Aorta (tissue), 5 donors: ENCODE measurements at regions of chr22 and their contacts with region 1.

Region 1: GRCh38 chr22:23178512-23179254 is 1.6 kb upstream of the BCR start:
- DNase-seq: peak; percentile 75 to 91
- ATAC-seq: peak; percentile 82
- H3K4me3 ChIP-seq: no peak overlapping the region
- H3K27ac ChIP-seq: peak overlapping the region in 1 of 2 donors; percentile 42
- H3K4me1 ChIP-seq: no peaks in the 10 kb centered on the region
- H3K27me3 ChIP-seq: no peaks in the 10 kb centered on the region

Region 2: DNA sequence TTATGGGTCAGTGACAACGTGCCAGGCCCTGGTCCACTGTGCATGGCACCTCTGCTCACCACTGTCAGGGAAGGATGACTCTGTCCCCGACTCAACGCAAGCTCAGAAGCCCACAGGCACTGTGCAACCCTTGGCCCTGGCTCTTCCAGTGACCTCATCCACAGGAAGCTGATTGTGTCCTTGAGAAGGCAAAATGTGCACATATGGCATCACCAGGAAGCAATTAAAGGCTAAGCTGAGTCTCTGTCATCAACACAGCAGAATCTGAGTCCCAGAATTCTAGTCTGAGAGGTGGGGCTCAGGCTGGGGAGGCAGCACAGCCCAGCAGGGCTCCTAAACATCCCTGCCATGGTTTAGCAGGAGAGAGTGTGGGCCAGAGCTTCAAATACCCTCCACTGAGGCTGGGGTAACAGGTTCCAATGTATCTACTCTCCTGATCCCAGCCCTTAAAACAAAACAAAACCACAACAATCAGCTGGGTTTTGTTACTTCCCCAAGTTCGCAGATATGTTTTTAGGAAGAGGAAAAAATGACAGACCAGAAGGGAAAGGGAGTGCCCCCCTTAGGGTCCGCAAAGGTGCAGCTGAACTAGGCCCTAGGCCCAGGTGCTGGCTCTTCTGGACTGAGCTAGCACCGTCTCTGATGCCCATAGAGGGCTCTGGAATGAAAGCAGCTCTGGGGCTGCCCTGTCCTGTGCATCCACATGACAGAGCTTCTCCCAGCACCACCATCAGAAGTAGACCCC is 141.8 kb before region 1 on chr22:
- intact Hi-C with region 1: no loop called
- DNase-seq: no peak
- ATAC-seq: no peak
- H3K4me3 ChIP-seq: no peak overlapping the region
- H3K27ac ChIP-seq: no peak overlapping the region
- H3K4me1 ChIP-seq: no peaks in the 10 kb centered on the region
- H3K27me3 ChIP-seq: no peaks in the 10 kb centered on the region

Region 3: DNA sequence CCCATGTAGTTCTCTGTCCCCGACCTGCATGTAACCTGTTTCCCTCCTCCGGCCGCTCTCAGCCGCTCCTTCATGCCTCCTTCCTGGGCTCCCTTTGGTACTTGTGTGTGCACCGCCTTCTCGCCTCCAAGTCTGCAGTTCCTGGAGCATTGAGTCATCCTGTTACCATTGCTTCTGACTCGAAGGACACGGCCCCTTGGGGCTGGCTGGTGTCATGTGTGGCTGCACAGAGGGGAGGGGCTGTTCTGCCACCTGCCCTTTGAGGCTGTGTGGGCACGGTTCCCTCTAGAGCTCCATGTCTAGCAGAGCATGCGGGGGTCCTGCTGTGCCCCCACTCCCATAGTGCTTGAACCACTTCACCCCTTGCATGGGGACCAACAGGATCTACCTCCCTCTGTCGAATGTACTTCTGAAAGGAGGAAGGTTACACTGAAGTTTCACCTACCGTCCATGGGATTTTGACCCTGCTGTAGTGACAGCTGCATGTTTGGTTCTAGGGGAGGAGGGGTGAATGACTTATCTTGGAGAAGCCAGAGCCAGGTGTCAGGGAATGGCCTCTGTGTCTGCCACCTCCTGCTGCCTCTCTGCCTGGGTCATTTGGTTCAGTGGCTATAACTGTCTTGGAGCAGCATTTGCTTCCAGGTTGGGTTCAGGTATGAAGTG is 41.3 kb after region 1 on chr22:
- intact Hi-C with region 1: loop called in 1 of 2 experiments (anchors 5 kb)
- DNase-seq: peak; percentile 75 to 83
- ATAC-seq: peak; percentile 23
- H3K4me3 ChIP-seq: no peak overlapping the region
- H3K27ac ChIP-seq: no peak overlapping the region
- H3K4me1 ChIP-seq: peaks cover 4 to 8% of the 10 kb centered on the region in 2 donors
- H3K27me3 ChIP-seq: no peaks in the 10 kb centered on the region

Region 4: DNA sequence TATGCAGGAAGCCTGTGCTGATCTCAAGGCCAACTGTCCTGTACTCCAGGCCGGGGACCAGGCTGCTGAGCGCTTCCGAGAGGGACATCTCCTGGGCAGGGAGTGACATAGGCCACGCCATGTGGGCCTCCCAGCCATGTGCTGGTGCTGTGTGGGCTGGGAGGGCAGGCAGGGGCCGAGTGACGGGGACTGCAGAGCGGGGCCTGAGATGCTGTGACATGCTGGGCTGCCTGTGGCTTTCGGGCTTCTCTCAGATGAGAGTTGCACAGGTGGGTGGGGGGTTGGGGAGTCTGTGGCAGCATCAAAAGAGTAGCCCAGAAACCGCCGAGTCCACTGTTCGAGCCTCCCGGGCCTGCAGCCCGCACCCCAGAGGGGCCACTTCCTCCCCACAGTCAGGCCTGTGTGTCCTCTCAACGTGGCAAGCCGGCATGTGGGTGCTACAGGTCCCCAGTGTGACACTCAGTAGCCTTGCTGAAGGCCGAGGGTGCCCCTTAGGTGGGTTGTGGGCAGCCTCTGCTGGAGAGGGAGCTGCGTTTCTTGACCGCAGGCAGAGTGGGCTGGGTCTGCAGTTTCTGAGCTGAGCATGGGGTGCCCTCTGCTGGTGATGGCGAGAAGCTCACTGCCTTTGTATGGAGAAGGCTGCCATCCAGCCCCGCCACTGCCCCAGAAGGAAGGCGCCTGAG is 102.9 kb after region 1 on chr22:
- intact Hi-C with region 1: loop called (anchors 1 kb)
- DNase-seq: peak; percentile 91 to 97
- ATAC-seq: peak; percentile 90
- H3K4me3 ChIP-seq: no peak overlapping the region
- H3K27ac ChIP-seq: peak overlapping the region in 1 of 2 donors; percentile 85
- H3K4me1 ChIP-seq: no peaks in the 10 kb centered on the region
- H3K27me3 ChIP-seq: no peaks in the 10 kb centered on the region

Region 5: DNA sequence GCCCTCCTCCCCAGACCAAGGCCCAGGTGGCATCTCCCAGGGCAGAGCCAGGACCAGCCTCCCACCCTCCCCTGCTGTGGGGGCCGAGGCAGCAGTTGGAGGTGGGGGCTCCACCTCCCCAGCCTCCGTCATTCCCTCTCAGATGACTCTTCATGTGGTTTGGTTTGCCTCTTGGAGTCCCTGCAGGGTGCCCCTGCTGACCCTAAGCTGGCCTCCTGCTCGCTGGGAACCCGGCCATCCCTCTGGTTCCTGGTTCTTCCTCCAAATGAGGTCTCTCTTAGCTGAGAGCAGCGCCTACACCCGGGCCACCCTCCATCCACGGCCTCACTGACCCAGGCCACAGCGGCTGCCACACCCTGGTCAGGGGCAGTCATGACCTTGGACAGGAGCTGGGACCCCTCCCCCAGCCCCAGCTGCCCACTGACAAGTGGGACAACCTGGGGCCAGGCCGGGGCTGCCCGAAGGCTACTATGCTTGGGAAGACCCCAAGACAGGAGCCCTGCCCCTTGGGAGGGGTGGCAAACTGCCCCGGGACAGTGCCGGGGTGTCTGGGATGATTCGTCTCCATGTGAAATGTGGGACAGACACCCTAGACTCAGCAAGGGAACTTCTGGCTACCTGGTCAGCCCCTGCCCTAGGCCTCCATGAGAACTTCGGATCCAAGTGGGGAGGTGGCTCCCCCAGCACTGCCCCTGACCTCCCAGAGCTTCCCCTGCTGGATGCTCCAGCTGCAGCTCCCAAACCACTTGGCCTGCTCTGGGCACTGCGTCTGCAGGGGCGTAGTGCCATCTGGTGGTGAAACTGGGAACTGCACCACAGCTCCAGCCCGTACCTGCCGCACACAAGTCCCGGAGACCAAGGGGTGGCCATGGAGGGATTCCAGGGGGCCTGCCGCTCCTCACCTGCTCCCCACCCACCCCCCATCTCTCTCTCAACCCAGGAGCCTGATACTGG is 206.9 kb after region 1 on chr22:
- intact Hi-C with region 1: loop called (anchors 2 to 5 kb)
- DNase-seq: peak; percentile 86 to 94
- ATAC-seq: peak; percentile 88
- H3K4me3 ChIP-seq: no peak overlapping the region
- H3K27ac ChIP-seq: no peak overlapping the region
- H3K4me1 ChIP-seq: no peaks in the 10 kb centered on the region
- H3K27me3 ChIP-seq: no peaks in the 10 kb centered on the region

Region 6: GRCh38 chr22:23539135-23539838 is 360.6 kb after region 1 on chr22:
- intact Hi-C with region 1: loop called in 1 of 2 experiments (anchors 10 kb)
- DNase-seq: peak; percentile 82 to 88
- ATAC-seq: peak; percentile 97
- H3K4me3 ChIP-seq: no peak overlapping the region
- H3K27ac ChIP-seq: no peak overlapping the region
- H3K4me1 ChIP-seq: no peaks in the 10 kb centered on the region
- H3K27me3 ChIP-seq: no peaks in the 10 kb centered on the region